H1 (cell line): ENCODE measurements at regions of chr15 and their contacts with region 1.

Region 1: DNA sequence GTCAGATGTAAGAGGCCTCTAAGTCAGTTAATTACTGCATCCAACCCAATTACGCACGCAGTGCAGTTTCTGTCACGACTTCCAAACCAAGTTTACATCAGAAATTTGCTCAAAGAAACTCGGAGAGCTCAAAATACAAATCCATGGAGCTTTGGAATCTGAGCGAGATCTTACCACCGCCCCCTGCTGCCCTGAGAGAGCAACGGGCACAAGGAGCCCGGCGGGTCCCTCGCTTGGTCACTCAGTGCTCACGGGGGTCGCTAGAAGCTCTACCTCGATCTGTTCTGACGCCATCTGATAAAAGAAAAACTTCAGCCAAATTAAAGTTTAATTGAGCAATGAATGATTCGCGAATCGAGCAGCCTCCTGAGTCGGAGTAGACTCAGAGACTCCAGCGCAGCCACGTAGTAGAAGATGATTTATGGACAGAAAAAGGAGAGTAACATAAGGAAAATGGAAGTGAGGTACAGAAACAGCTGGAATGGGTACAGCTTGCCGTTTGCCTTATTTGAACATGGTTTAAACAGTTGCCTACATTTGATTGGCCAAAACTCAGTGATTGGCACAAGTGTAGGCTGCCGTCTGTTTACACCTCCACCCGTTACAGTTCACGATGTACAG is 232.7 kb upstream of the ATP10A start:
- DNase-seq: peak; percentile 38 to 74
- H3K4me3 ChIP-seq: no peak overlapping the region
- H3K27ac ChIP-seq: no peak overlapping the region
- H3K4me1 ChIP-seq: no peaks in the 10 kb centered on the region
- H3K27me3 ChIP-seq: peaks cover 0 to 1% (median 0%) of the 10 kb centered on the region in 4 experiments; a peak in 1 of 7 replicates
- CTCF ChIP-seq: peak; percentile 61 to 71 (median 69)
- EP300 ChIP-seq: no peak
- POLR2A ChIP-seq: no peak
- RAD21 ChIP-seq: peak; percentile 50 to 71

Region 2: DNA sequence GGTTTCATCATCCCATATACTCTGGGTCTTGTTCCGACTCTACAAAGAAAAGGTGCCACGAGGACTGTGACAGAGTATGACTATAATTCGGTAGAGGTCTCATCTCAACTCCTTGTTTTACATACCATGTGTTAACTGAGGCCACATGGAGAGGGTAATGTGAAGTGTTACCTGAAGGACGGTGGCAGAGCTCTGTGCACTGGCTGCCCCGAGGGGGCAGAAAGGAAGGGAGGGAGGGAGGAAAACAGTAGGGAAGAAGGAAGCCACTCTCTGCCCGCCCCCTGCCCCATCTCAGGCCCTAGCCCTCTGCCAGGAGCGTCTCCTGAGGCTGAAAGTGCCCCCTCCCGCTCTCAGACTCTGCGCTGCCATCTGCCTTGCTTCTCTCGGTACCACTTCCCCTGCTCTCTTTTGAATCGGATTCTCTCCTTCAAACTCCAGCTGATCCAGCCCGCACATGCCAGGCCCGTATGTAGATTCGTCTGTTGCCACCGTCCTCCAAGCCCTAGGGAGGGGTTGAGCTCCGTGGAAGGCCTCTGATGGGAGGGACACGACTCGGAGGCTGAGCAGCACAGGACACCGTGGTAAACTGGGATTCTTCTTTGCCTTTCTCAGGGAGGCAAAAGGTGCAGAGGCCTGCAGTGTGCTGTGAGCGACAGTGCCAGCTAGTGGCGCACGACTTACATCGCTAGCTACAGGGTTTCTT is 162.2 kb before region 1 on chr15:
- CTCF ChIA-PET with region 1: interaction called, 15 read pairs
- POLR2A ChIA-PET with region 1: no interaction called
- DNase-seq: peak; percentile 49 to 74
- H3K4me3 ChIP-seq: peak overlapping the region; percentile 13 to 51 (median 24); a peak in 6 of 8 replicates
- H3K27ac ChIP-seq: no peak overlapping the region
- H3K4me1 ChIP-seq: peaks cover 0 to 9% (median 7%) of the 10 kb centered on the region in 4 experiments; a peak in 6 of 7 replicates
- H3K27me3 ChIP-seq: no peaks in the 10 kb centered on the region; a peak in 1 of 7 replicates
- CTCF ChIP-seq: peak; percentile 79 to 81 (median 80)
- EP300 ChIP-seq: no peak
- POLR2A ChIP-seq: no peak
- RAD21 ChIP-seq: peak; percentile 82

Region 3: DNA sequence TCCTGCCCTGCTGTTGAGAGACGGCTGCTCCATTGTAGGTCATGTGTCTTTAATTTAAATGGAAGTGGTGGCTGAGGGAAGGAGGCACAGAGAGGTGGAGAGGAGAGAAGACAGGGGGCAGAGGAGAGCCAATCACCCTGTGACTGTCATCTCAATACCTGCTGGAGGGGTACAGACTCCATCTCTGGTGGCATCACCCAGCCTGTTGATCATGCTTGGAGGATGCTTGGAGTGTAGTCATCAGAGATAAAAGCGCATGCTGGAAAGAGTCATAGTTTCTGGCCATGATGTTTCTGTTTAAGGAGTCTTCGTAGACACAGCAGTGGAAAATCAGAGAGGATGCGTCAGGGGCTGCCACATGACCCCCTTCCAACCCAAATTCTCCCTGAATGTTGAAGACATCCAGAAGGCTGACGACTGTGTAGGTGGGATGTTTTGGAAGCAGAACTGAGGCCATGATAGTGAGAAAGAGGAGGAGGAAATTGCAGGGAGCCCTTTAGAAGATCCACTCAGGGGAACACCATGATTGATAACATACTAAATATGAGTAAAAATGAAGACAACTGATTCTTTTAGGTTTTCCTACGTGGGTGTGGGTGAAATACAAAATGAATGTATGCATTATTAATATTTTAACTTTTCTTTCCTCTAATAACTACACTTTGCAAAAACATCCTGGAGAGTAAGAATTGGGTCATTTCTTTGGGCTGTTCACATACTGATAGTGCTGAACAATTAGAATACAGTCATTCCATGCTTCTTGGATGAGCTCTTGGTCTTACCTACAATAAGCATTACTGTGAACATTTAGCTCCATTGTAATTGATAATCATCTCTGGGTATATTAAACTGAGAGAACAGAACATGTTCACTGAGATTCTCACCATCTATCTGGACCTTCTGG is 22.1 kb before region 1 on chr15:
- CTCF ChIA-PET with region 1: interaction called, 13 read pairs
- POLR2A ChIA-PET with region 1: no interaction called
- DNase-seq: no peak
- H3K4me3 ChIP-seq: no peak overlapping the region
- H3K27ac ChIP-seq: no peak overlapping the region
- H3K4me1 ChIP-seq: no peaks in the 10 kb centered on the region; a peak in 1 of 7 replicates
- H3K27me3 ChIP-seq: 0 out of 7 replicates have a peak, but pooled peaks cover 0 to 2% (median 0%) of the 10 kb centered on the region in 4 experiments
- CTCF ChIP-seq: peak in 2 of 3 experiments; percentile 11 to 27; a peak in 2 of 4 replicates
- EP300 ChIP-seq: no peak
- POLR2A ChIP-seq: no peak
- RAD21 ChIP-seq: peak in 1 of 2 experiments; percentile 37; a peak in 3 of 4 replicates

Region 4: GRCh38 chr15:26082221-26083109 is 13.4 kb before region 1 on chr15:
- CTCF ChIA-PET with region 1: interaction called, 40 read pairs
- POLR2A ChIA-PET with region 1: interaction called, 4 read pairs
- DNase-seq: peak; percentile 97 to 98
- H3K4me3 ChIP-seq: peak overlapping the region; percentile 43 to 80 (median 74)
- H3K27ac ChIP-seq: peak overlapping the region; percentile 88
- H3K4me1 ChIP-seq: peaks cover 1 to 9% (median 5%) of the 10 kb centered on the region in 4 experiments; a peak in 6 of 7 replicates
- H3K27me3 ChIP-seq: no peaks in the 10 kb centered on the region
- CTCF ChIP-seq: no peak
- EP300 ChIP-seq: no peak
- POLR2A ChIP-seq: peak; percentile 92 to 96
- RAD21 ChIP-seq: peak in 1 of 2 experiments; percentile 19; a peak in 1 of 4 replicates

Region 5: DNA sequence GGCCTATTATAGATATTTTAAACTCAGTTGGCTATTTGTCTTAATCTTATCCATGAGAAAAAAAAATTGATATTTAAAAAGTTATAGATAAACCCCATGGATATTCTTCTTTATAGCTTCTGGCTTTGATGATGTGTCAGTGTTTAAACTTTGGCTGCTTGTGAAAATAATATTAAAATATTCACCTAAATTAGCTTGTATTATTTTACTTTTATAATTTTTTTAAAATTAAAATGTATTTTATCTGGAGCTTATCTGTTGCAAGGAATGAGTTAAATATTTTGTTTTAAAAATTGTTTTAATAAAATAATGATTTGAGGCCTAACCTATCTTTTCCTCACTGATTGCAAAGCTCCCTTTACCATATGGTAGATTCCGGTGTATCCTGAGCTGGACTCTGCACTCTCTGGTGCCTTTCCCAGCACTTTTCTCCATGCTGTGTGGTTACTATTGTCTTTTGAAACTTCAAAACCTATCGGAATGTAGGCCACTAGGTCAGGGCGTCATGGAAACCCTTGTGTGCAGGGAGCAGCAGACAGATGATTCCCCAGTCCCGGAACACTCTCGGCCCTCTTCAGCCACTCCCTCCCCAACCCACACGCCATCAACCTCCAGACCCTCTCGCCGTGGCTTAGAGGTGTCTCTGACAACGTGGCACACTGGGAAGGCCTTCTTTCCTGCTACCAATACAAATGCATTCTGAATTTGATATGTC is 19.6 kb after region 1 on chr15:
- CTCF ChIA-PET with region 1: interaction called, 14 read pairs
- POLR2A ChIA-PET with region 1: no interaction called
- DNase-seq: peak in 1 of 2 experiments; percentile 37
- H3K4me3 ChIP-seq: no peak overlapping the region
- H3K27ac ChIP-seq: no peak overlapping the region
- H3K4me1 ChIP-seq: no peaks in the 10 kb centered on the region
- H3K27me3 ChIP-seq: no peaks in the 10 kb centered on the region; a peak in 1 of 7 replicates
- CTCF ChIP-seq: no peak
- EP300 ChIP-seq: no peak
- POLR2A ChIP-seq: no peak
- RAD21 ChIP-seq: no peak

Region 6: DNA sequence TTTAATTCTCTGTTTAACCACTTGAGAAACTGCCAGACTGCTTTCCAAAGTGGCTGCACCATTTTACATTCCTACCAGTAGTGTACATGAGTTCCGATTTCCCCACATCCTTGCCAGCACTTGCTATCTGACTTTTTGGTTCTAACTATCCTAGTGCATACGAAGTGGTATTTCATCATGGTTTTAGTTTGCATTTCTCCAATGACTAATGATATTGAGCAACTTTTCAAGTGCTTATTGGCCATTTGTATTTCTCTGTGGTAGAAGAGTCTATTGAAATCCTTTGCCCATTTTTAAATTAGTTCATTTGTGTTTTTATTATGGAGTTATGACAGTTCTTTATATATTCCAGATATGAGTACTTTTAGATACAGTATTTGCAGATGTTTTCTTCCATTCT is 429.3 kb after region 1 on chr15:
- CTCF ChIA-PET with region 1: no interaction called
- POLR2A ChIA-PET with region 1: no interaction called
- DNase-seq: no peak
- H3K4me3 ChIP-seq: no peak overlapping the region
- H3K27ac ChIP-seq: no peak overlapping the region
- H3K4me1 ChIP-seq: peaks cover 0 to 3% (median 0%) of the 10 kb centered on the region in 4 experiments; a peak in 2 of 7 replicates
- H3K27me3 ChIP-seq: no peaks in the 10 kb centered on the region
- CTCF ChIP-seq: no peak
- EP300 ChIP-seq: no peak
- POLR2A ChIP-seq: no peak
- RAD21 ChIP-seq: no peak